ENCODE measurements at regions of chr17 and their contacts with region 1.

Region 1: DNA sequence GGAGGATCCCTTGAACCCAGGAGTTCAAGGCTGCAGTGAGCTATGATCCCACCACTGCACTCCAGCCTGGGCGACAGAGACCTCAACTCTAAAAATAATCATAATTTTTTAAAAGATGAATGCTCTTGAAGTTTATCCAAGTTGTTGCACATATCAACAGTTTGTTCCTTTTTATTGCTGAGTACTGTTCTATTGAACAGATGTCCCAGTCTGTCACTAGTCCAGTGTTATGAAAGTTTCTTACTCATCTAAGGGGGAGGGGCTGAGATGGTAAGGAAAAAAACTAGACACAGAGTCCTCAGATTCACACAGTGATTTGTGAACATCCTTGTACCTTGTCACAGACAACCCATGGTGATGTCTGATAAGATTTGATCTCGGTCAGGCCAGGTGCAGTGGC is 3.9 kb downstream of the ACAP1 start:
- DNase-seq: no peak
- H3K4me3 ChIP-seq: no peak overlapping the region
- H3K4me3 Mint-ChIP-seq: no peak overlapping the region
- H3K27ac ChIP-seq: peak overlapping the region in 1 of 2 donors; percentile 41
- H3K27ac Mint-ChIP-seq: peak overlapping the region in 4 of 7 donors; percentile 35 to 61 (median 52)
- H3K4me1 ChIP-seq: peaks cover 24 to 34% of the 10 kb centered on the region in 2 donors
- H3K4me1 Mint-ChIP-seq: peaks cover 35% of the 10 kb centered on the region
- H3K27me3 ChIP-seq: no peaks in the 10 kb centered on the region
- H3K27me3 Mint-ChIP-seq: peaks cover 0 to 6% (median 0%) of the 10 kb centered on the region in 3 donors
- CTCF ChIP-seq: no peak

Region 2: GRCh38 chr17:7280519-7281429 is 59.4 kb before region 1 on chr17:
- intact Hi-C with region 1: loop called in 1 of 2 experiments (anchors 5 kb)
- DNase-seq: peak; percentile 55 to 74 (median 70)
- H3K4me3 ChIP-seq: peak overlapping the region in 2 of 3 experiments; percentile 28 to 72
- H3K4me3 Mint-ChIP-seq: peak overlapping the region; percentile 74 to 88
- H3K27ac ChIP-seq: no peak overlapping the region
- H3K27ac Mint-ChIP-seq: peak overlapping the region in 6 of 7 donors; percentile 28 to 82 (median 54)
- H3K4me1 ChIP-seq: peaks cover 27 to 28% of the 10 kb centered on the region in 2 donors
- H3K4me1 Mint-ChIP-seq: peaks cover 30% of the 10 kb centered on the region
- H3K27me3 ChIP-seq: peaks cover 13 to 46% of the 10 kb centered on the region in 2 donors
- H3K27me3 Mint-ChIP-seq: peaks cover 44 to 65% (median 45%) of the 10 kb centered on the region in 3 donors
- CTCF ChIP-seq: peak; percentile 87

Measured in CD14-positive monocyte (primary cell).